Activated CD8-positive, alpha-beta T cell treated with anti-CD3 and anti-CD28 coated beads for 36 hours (primary cell): ENCODE measurements at regions of chr17 and their contacts with region 1.

Region 1: DNA sequence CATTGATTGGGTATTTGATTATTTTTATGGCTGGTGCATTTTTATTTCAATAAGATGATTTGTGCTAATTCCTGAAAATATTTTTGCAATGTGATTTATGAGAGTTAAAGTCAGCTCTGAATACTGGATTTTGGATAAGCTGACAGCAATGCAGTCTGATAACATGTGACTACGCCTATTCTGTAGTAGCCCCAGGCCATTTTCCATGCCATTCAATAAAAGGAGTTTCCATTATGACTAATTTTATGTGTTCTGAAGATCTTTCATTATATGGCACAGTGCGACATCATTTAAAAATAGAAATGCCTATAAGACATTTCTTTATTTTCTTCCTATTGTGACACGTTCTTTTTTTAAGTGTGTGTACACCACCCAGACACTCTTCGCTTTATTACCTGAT is 46.3 kb downstream of the KCNJ2 start:
- DNase-seq: no peak
- ATAC-seq: no peak
- H3K4me3 Mint-ChIP-seq: no peak overlapping the region
- H3K27ac Mint-ChIP-seq: no peak overlapping the region
- H3K4me1 Mint-ChIP-seq: no peaks in the 10 kb centered on the region
- H3K27me3 Mint-ChIP-seq: no peaks in the 10 kb centered on the region
- CTCF ChIP-seq: no peak

Region 2: DNA sequence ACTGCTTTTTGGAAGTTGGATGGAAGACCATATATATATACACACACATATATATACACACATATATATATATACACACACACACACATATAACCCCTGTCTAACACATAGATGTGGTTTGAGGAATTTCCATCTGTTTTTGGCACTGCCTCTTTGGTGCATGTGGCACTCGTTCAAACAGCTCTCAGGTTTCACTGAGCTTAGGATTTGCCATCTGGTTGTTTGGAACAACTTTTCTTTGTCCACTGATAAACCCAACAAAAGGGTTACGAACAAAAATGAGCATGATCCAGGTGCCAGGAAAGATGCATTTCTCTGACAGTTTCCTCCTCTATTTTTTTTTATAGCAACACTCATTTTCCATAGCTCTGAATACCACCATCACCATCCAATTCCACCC is 155.2 kb before region 1 on chr17:
- CTCF ChIA-PET with region 1: no interaction called
- POLR2A ChIA-PET with region 1: no interaction called
- intact Hi-C with region 1: no loop called
- DNase-seq: no peak
- ATAC-seq: no peak
- H3K4me3 Mint-ChIP-seq: no peak overlapping the region
- H3K27ac Mint-ChIP-seq: no peak overlapping the region
- H3K4me1 Mint-ChIP-seq: no peaks in the 10 kb centered on the region
- H3K27me3 Mint-ChIP-seq: peaks cover 5% of the 10 kb centered on the region
- CTCF ChIP-seq: no peak

Region 3: DNA sequence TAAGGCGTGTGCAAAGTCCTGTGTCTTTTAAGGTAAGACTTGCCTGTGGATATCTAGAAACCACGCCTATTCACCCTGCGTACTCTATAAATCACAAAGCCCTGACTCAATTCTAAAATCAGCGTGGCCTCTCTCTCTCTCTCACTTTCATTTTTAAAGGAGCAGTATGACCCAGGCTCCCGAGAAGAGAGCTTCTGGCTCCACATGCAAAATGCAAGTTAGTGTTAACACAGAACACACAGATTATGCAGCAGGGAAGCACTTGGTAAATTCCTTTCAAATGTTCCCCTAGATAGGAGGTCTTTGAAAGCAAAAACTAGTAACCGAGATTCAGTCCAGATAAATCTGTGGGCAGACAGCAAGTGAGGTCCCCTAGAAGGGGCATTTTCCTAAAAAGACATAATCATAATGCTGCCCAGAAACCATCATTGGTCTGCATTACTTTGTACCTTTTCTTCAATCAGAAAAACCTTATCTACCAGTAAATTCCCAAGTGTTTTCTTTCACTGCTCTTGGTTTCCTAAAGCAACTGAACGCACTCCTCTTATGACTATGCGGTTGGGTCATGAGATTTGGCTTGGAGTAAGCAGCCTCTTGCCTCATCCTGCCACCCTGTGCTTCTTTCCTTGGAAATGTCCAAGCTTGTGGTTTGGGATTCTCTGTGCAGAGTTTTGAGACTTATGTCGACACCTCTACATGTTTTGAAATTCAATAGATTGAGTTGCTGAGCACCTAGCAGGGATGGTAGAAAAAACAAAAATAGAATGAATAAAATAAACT is 78.0 kb before region 1 on chr17:
- CTCF ChIA-PET with region 1: no interaction called
- POLR2A ChIA-PET with region 1: no interaction called
- intact Hi-C with region 1: loop called (anchors 10 kb)
- DNase-seq: peak; percentile 60
- ATAC-seq: peak; percentile 97
- H3K4me3 Mint-ChIP-seq: no peak overlapping the region
- H3K27ac Mint-ChIP-seq: no peak overlapping the region
- H3K4me1 Mint-ChIP-seq: peaks cover 20% of the 10 kb centered on the region
- H3K27me3 Mint-ChIP-seq: peaks cover 4% of the 10 kb centered on the region
- CTCF ChIP-seq: no peak

Region 4: GRCh38 chr17:70202840-70203239 is 12.8 kb before region 1 on chr17:
- CTCF ChIA-PET with region 1: no interaction called
- POLR2A ChIA-PET with region 1: no interaction called
- intact Hi-C with region 1: no loop called
- DNase-seq: no peak
- ATAC-seq: no peak
- H3K4me3 Mint-ChIP-seq: no peak overlapping the region
- H3K27ac Mint-ChIP-seq: no peak overlapping the region
- H3K4me1 Mint-ChIP-seq: no peaks in the 10 kb centered on the region
- H3K27me3 Mint-ChIP-seq: peaks cover 4% of the 10 kb centered on the region
- CTCF ChIP-seq: no peak